MCF 10A (cell line): ENCODE measurements at regions of chr1 and their contacts with region 1.

Region 1: GRCh38 chr1:1906185-1907097 is 8.6 kb upstream of the CALML6 start:
- DNase-seq: peak; percentile 83
- H3K4me3 Mint-ChIP-seq: peak overlapping the region; percentile 41
- H3K27ac Mint-ChIP-seq: peak overlapping the region; percentile 78
- H3K4me1 Mint-ChIP-seq: peaks cover 13% of the 10 kb centered on the region
- H3K27me3 Mint-ChIP-seq: no peaks in the 10 kb centered on the region
- CTCF ChIP-seq: peak; percentile 91

Region 2: DNA sequence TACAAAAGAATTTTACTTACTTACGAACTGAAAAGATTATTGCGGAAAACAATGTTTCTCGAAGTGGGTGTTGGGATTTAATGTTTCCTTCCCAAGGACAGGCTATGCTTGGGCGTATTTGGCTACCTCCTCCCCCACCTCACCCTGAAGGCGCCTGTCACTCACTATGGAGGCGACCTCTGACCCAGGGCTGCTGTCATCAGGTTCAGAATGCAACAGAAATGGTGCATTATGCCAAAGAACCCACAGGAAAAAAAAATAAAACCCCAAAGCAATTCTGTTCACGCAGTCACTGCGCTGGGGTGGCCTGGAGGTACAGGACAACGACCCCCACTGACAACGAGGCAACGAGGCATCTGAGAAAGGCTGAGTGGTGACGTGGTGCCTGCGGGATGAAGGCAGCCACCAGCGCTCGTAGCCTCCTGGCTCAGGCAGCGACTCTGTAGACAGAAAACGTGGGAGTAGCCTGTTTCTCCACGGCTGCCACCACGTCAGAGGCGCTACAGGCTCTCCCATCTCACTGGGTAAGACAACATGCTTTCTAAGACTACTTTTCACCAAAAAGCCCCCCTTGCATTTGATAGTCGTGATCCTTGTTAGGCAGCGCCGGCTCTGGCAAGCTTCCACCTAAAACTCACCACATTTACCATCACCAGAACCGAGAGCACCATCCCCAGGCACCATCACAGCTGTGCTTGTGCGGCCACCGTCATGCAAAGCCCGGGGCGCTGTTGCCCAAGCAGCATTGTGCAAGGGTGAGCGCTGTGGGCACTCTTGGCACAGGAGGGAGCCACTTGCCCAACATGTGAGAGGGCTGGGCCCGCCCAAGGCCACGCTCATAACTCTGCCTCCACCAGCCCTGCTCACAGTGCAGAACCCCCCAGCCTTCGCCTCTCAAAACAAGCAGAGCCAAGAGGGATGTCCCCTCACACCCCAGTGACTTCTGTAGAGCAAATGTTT is 142.5 kb before region 1 on chr1:
- CTCF ChIA-PET with region 1: interaction called, 12 read pairs
- POLR2A ChIA-PET with region 1: interaction called, 8 read pairs
- intact Hi-C with region 1: loop called (anchors 1 kb)
- DNase-seq: peak; percentile 98
- H3K4me3 Mint-ChIP-seq: peak overlapping the region; percentile 42
- H3K27ac Mint-ChIP-seq: peak overlapping the region; percentile 87
- H3K4me1 Mint-ChIP-seq: peaks cover 31% of the 10 kb centered on the region
- H3K27me3 Mint-ChIP-seq: no peaks in the 10 kb centered on the region
- CTCF ChIP-seq: no peak

Region 3: DNA sequence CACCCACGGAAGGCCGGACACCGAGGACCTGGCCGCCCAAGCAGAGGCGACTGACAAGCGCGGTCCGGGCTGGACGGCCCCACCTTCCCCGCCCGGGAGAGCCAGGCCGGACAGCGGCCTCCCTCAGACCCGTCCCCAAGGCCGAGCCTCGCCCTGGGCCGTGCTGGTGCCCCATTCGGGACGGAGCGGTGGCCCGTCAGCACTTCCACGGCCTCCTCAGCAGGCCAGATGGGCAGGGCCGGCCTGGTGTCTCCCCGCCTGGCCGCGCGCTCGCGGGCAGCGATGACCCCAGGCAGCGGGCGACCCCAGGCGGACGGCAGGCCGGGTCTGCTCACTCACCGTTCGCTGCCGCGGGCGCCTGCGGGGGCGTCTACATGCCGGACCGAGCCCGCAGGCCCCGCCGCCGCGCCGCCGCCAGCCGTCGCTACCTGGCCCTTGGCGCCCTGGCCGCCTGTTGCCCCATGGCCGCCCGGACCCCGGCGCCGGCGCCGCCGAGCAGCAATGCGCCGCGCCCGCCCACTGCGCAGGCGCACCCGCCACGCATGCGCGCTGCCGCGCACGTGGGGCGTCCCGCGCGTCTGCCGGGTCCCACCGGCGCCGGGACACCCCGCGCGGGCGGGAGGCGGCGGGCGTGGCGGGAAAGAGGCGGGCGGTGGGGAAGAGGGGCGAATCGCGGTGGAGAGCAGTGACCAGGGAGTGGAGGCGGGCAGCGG is 128.3 kb before region 1 on chr1 and contains the start of gene NADK:
- CTCF ChIA-PET with region 1: interaction called, 35 read pairs
- POLR2A ChIA-PET with region 1: interaction called, 42 read pairs
- intact Hi-C with region 1: loop called (anchors 2 kb)
- DNase-seq: peak; percentile 59
- H3K4me3 Mint-ChIP-seq: peak within 1 kb of the TSS; percentile 82
- H3K27ac Mint-ChIP-seq: peak within 1 kb of the TSS; percentile 68
- H3K4me1 Mint-ChIP-seq: peaks cover 36% of the 10 kb centered on the region
- H3K27me3 Mint-ChIP-seq: no peaks in the 10 kb centered on the region
- CTCF ChIP-seq: no peak
- total RNA-seq, gene NADK: 106 and 107 TPM in 2 replicates

Region 4: DNA sequence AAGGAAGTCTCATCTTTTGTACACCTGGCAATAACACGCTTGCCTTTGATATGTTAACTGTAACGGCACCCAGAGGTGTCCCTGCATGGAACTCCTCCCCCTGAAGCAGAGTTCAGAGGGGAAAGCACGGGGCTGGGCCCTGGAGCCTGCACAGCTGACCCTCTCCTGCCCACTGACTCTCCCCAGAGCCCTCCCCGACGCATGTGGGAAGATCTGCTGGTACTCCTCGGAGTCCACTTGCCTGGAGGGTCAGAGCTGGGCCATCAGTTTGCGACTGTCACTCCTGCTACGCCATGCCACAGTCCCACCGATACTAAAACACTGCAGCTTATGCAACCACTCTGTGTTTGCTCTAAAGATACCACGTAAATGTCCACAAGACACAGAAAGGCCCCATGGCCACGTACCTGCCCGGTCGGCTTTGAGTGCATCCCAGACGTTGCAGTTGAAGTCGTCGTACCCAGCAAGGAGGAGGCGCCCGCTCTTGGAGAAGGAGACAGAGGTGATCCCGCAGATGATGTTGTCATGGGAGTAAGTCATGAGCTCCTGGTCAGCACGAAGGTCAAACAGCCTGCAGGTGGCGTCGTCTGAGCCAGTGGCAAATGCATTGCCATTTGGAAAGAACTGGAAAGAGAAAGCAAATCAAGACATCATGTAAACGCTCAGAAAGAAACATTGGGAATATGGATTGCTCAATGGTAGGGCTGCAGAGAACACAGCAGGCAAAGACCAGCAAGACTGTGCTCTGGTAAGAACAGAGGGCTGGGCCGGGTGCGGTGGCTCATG is 117.6 kb before region 1 on chr1:
- CTCF ChIA-PET with region 1: interaction called, 13 read pairs
- POLR2A ChIA-PET with region 1: interaction called, 5 read pairs
- intact Hi-C with region 1: loop called (anchors 1 kb)
- DNase-seq: peak; percentile 29
- H3K4me3 Mint-ChIP-seq: no peak overlapping the region
- H3K27ac Mint-ChIP-seq: no peak overlapping the region
- H3K4me1 Mint-ChIP-seq: no peaks in the 10 kb centered on the region
- H3K27me3 Mint-ChIP-seq: no peaks in the 10 kb centered on the region
- CTCF ChIP-seq: peak; percentile 32

Region 5: DNA sequence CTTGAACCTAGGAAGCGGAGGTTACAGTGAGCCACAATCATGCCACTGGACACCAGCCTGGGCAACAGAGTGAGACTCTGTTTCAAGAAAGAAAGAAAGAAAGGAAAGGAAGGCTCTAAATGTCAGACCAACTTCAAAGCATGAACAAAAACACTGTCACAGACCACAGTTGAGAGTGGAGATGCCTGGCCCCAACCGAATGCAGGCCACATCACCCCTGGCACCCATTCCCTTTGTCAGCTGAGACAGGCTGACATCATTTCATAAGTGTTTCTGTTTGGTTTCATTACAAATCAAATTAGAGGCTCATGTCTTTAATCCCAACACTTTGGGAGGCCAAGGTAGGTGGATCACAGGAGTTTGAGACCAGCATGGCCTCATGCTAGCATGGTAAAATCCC is 99.6 kb before region 1 on chr1:
- CTCF ChIA-PET with region 1: interaction called, 12 read pairs
- POLR2A ChIA-PET with region 1: no interaction called
- intact Hi-C with region 1: no loop called
- DNase-seq: no peak
- H3K4me3 Mint-ChIP-seq: no peak overlapping the region
- H3K27ac Mint-ChIP-seq: no peak overlapping the region
- H3K4me1 Mint-ChIP-seq: no peaks in the 10 kb centered on the region
- H3K27me3 Mint-ChIP-seq: no peaks in the 10 kb centered on the region
- CTCF ChIP-seq: no peak

Region 6: GRCh38 chr1:1890506-1891348 is 15.7 kb before region 1 on chr1 and contains the start of gene GNB1:
- CTCF ChIA-PET with region 1: interaction called, 25 read pairs
- POLR2A ChIA-PET with region 1: interaction called, 29 read pairs
- intact Hi-C with region 1: no loop called
- DNase-seq: peak; percentile 85
- H3K4me3 Mint-ChIP-seq: peak within 1 kb of the TSS; percentile 85
- H3K27ac Mint-ChIP-seq: peak within 1 kb of the TSS; percentile 91
- H3K4me1 Mint-ChIP-seq: peaks cover 25% of the 10 kb centered on the region
- H3K27me3 Mint-ChIP-seq: no peaks in the 10 kb centered on the region
- CTCF ChIP-seq: no peak
- total RNA-seq, gene GNB1: 426 and 430 TPM in 2 replicates

Region 7: DNA sequence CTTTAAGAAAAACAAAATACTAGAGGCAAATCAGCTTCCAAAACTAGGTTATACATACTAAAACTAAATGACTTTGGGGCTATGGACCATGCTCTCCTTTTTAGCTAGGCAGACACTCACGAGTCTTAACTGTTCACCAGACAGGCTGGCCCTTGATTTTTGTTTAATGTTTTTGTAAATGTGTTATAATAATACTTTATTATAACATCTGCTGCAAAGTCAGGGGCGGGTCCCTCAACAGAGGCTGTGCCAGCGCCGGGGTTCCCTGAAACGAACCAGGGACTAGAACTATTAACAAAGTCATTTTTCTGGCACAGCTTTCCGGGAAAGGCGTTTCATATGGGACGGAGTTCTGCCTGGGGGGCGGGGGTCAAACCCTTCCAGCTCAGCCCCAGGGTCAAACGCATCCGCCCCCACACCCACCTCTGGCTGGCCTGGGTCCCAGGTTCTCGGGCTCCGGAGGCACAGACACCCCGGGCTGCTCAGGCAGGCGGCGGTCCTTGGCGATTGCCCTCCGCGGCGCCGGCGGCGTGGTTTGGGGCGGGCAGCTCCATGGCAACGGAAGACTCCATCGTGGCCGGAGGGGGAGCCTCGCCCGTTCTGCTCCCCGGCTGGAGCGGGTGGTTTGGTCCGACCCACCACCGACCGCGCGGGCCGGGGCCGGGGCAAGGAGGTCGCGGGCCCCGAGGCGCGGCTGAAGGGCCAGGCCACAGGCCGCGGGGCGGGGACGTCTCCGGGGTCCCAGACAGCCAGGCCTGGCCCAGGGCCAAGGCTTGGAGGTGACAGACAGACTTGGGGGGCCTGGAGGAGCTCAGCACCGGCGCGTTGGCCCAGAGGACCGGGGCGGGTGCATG is 97.1 kb after region 1 on chr1 and contains the start of gene CFAP74:
- CTCF ChIA-PET with region 1: no interaction called
- POLR2A ChIA-PET with region 1: no interaction called
- intact Hi-C with region 1: no loop called
- DNase-seq: no peak
- H3K4me3 Mint-ChIP-seq: no peak within 1 kb of the TSS
- H3K27ac Mint-ChIP-seq: no peak within 1 kb of the TSS
- H3K4me1 Mint-ChIP-seq: no peaks in the 10 kb centered on the region
- H3K27me3 Mint-ChIP-seq: no peaks in the 10 kb centered on the region
- CTCF ChIP-seq: no peak
- total RNA-seq, gene CFAP74: not detected in 2 replicates

Region 8: DNA sequence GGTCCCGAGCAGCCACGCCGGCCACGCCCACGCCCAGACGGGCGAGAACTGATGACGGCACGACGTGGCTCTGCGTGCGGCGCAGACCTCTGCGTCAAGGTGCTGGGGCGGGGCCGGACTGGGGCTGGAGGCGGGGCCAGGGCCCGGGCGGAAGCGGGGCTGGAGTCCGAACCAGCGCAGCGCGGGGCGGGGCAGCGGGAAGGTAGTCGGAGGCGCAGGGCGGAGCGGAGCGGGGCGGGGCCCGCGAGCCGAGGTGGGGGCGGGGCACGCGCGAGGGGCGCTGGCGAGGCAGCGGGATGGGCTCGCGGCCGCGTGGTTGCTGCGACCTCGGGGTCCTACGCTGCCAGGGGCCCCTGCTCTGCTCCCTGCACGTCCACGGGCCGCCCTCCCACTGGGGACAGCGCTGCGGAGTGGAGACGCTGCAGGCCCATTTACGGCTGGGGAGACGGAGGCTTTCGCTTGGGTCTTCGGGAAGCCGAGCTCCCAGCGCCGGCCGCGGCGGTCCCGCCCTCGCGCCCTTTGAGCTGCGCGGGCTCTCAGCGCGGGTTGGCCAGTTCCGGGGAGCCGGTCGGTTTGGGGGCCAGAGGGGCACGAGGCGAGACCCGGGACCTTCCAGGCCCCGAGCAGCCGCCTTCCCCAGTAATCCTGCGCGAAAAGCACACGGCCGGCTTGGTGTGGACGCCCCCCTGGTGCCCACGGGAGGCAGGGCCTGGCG is 506.2 kb after region 1 on chr1 and contains the start of gene PEX10:
- CTCF ChIA-PET with region 1: no interaction called
- POLR2A ChIA-PET with region 1: no interaction called
- intact Hi-C with region 1: no loop called
- DNase-seq: peak; percentile 94
- H3K4me3 Mint-ChIP-seq: peak within 1 kb of the TSS; percentile 75
- H3K27ac Mint-ChIP-seq: peak within 1 kb of the TSS; percentile 87
- H3K4me1 Mint-ChIP-seq: peaks cover 8% of the 10 kb centered on the region
- H3K27me3 Mint-ChIP-seq: no peaks in the 10 kb centered on the region
- CTCF ChIP-seq: no peak
- total RNA-seq, gene PEX10: 31.3 and 36.1 TPM in 2 replicates